CD8-positive, alpha-beta T cell (primary cell): ENCODE measurements at regions of chr2 and their contacts with region 1.

Region 1: GRCh38 chr2:96407041-96407918 is 71.7 kb downstream of the NCAPH start:
- DNase-seq: peak; percentile 55 to 94 (median 79)
- ATAC-seq: peak; percentile 93
- H3K4me3 ChIP-seq: peak overlapping the region in 1 of 2 experiments; percentile 33
- H3K4me3 Mint-ChIP-seq: peak overlapping the region; percentile 72
- H3K27ac ChIP-seq: peak overlapping the region; percentile 48 to 58
- H3K27ac Mint-ChIP-seq: peak overlapping the region; percentile 97
- H3K4me1 ChIP-seq: peaks cover 36% of the 10 kb centered on the region
- H3K4me1 Mint-ChIP-seq: peaks cover 51% of the 10 kb centered on the region
- H3K27me3 ChIP-seq: no peaks in the 10 kb centered on the region
- H3K27me3 Mint-ChIP-seq: no peaks in the 10 kb centered on the region
- CTCF ChIP-seq: peak; percentile 71

Region 2: DNA sequence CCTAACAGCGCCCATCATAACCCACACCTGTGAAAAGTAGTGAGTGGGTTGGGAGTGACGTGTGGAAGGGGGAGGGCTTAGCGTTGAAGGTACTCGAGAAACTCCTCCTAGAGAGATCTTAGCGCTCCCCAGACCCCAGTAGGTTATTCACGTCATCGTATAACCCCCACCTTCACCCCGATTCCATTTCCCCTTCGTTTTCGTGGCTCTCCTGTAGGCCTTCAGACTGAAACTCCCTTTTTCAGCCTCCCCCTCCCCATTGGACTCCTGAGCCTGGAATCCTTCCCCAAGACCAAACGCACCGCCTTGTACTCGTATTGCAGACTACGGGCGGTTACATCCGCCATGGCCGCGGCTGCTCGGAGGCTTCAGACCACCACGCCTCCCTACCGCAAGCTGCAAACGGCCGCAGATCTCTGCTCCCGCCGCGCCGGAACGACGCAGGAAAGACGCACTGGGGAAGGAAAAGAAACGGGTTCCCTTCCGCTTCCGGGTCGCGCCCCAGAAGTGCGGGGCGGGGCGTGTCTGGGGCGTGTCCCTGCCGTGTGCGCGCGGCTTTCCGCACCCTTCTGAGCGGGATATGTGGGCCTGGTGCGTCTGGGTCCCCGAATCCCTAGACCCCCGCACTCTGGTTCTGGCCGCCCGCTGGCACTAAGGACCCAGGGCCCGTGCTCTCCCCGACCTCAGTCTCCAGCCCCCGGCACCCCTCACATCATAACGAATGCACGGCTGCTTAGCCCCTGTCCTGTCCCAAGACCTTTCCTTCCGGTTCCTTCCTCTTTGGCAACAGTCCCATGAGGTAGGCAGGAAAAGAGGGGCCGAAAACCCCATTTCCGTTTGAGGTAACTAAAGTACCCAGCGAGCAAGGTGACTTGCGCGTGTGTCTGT is 101.9 kb before region 1 on chr2 and contains the start of gene SNRNP200:
- CTCF ChIA-PET with region 1: no interaction called
- POLR2A ChIA-PET with region 1: interaction called, 3 read pairs
- intact Hi-C with region 1: loop called in 1 of 2 experiments (anchors 5 kb)
- DNase-seq: peak; percentile 78 to 97 (median 91)
- ATAC-seq: peak; percentile 82
- H3K4me3 ChIP-seq: peak within 1 kb of the TSS; percentile 84 to 95
- H3K4me3 Mint-ChIP-seq: peak within 1 kb of the TSS; percentile 100
- H3K27ac ChIP-seq: peak within 1 kb of the TSS; percentile 96 to 98
- H3K27ac Mint-ChIP-seq: peak within 1 kb of the TSS; percentile 100
- H3K4me1 ChIP-seq: peaks cover 39% of the 10 kb centered on the region
- H3K4me1 Mint-ChIP-seq: peaks cover 55% of the 10 kb centered on the region
- H3K27me3 ChIP-seq: no peaks in the 10 kb centered on the region
- H3K27me3 Mint-ChIP-seq: no peaks in the 10 kb centered on the region
- CTCF ChIP-seq: no peak
- total RNA-seq, gene SNRNP200: 318 to 348 TPM

Region 3: DNA sequence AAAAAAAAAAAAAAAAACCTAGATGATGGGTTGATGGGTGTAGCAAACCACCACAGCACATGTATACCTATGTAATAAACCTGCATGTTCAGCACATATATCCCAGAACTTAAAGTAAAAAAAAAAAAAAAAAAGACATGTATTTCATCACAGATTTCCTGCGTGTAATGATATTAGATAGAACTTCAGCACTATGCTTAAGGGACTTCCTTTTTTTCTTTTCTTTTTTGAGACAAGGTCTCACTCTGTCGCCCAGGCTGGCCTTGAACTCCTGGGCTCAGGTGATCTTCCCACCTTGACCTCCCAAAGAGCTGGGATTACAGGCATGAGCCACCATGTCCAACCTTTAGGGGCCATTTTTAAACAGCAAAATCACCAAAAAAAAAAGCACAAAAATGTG is 55.8 kb after region 1 on chr2:
- CTCF ChIA-PET with region 1: interaction called, 3 read pairs
- POLR2A ChIA-PET with region 1: no interaction called
- intact Hi-C with region 1: loop called in 1 of 2 experiments (anchors 5 kb)
- DNase-seq: no peak
- ATAC-seq: no peak
- H3K4me3 ChIP-seq: no peak overlapping the region
- H3K4me3 Mint-ChIP-seq: no peak overlapping the region
- H3K27ac ChIP-seq: no peak overlapping the region
- H3K27ac Mint-ChIP-seq: no peak overlapping the region
- H3K4me1 ChIP-seq: no peaks in the 10 kb centered on the region
- H3K4me1 Mint-ChIP-seq: no peaks in the 10 kb centered on the region
- H3K27me3 ChIP-seq: no peaks in the 10 kb centered on the region
- H3K27me3 Mint-ChIP-seq: no peaks in the 10 kb centered on the region
- CTCF ChIP-seq: no peak

Region 4: GRCh38 chr2:96485751-96486651 is 78.7 kb after region 1 on chr2:
- CTCF ChIA-PET with region 1: interaction called, 14 read pairs
- POLR2A ChIA-PET with region 1: interaction called, 4 read pairs
- intact Hi-C with region 1: loop called in 1 of 2 experiments (anchors 5 kb)
- DNase-seq: peak; percentile 48 to 91 (median 77)
- ATAC-seq: peak; percentile 93
- H3K4me3 ChIP-seq: peak overlapping the region; percentile 56 to 59
- H3K4me3 Mint-ChIP-seq: peak overlapping the region; percentile 88
- H3K27ac ChIP-seq: peak overlapping the region; percentile 73 to 88
- H3K27ac Mint-ChIP-seq: peak overlapping the region; percentile 97
- H3K4me1 ChIP-seq: peaks cover 18% of the 10 kb centered on the region
- H3K4me1 Mint-ChIP-seq: peaks cover 22% of the 10 kb centered on the region
- H3K27me3 ChIP-seq: no peaks in the 10 kb centered on the region
- H3K27me3 Mint-ChIP-seq: no peaks in the 10 kb centered on the region
- CTCF ChIP-seq: no peak

Region 5: DNA sequence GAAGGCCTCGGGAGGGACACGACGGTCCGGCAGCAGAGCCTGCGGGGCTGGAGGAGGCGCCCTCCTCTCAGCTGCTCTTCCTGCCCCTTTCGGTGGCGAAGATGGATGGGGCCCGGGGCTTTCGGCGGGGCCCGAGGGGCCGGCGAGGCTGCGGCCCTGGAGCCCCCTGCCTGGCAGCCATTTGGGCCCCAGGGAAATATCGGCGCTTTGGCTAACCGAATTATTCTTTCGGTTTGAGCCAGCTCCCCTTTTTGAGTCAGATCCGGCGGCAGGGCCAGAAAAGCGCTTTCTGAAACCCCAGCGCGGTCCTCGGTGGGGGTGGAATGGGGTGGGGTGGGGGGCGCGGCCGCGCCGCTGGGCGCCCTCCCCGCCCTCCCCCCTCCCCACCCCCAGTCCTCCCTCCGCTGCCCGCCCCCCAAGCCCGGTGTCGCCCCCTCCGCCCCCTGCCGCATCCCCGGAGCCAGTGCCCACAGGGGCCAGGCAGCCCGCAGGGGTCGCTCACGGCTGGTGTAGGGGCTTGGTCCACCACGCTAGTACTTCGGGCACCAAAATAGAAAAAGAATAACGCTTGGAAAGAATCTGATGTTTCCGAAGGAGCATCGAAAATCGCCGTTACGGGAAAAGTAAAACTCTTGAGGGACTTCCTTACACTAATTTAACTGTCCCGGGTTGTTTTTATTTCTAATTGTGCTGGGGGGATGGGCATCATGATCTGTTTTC is 120.2 kb after region 1 on chr2:
- CTCF ChIA-PET with region 1: interaction called, 10 read pairs
- POLR2A ChIA-PET with region 1: interaction called, 4 read pairs
- intact Hi-C with region 1: no loop called
- DNase-seq: peak in 7 of 9 experiments; percentile 40 to 77 (median 62)
- ATAC-seq: no peak
- H3K4me3 ChIP-seq: peak overlapping the region; percentile 61 to 63
- H3K4me3 Mint-ChIP-seq: peak overlapping the region; percentile 84
- H3K27ac ChIP-seq: peak overlapping the region; percentile 32 to 50
- H3K27ac Mint-ChIP-seq: peak overlapping the region; percentile 67
- H3K4me1 ChIP-seq: peaks cover 36% of the 10 kb centered on the region
- H3K4me1 Mint-ChIP-seq: peaks cover 43% of the 10 kb centered on the region
- H3K27me3 ChIP-seq: no peaks in the 10 kb centered on the region
- H3K27me3 Mint-ChIP-seq: no peaks in the 10 kb centered on the region
- CTCF ChIP-seq: peak; percentile 38

Region 6: GRCh38 chr2:97067279-97068004 is 660.2 kb after region 1 on chr2:
- CTCF ChIA-PET with region 1: no interaction called
- POLR2A ChIA-PET with region 1: no interaction called
- intact Hi-C with region 1: no loop called
- DNase-seq: no peak
- ATAC-seq: no peak
- H3K4me3 ChIP-seq: no peak overlapping the region
- H3K4me3 Mint-ChIP-seq: no peak overlapping the region
- H3K27ac ChIP-seq: no peak overlapping the region
- H3K27ac Mint-ChIP-seq: no peak overlapping the region
- H3K4me1 ChIP-seq: no peaks in the 10 kb centered on the region
- H3K4me1 Mint-ChIP-seq: no peaks in the 10 kb centered on the region
- H3K27me3 ChIP-seq: no peaks in the 10 kb centered on the region
- H3K27me3 Mint-ChIP-seq: peaks cover 13% of the 10 kb centered on the region
- CTCF ChIP-seq: no peak